Activated CD4-positive, alpha-beta T cell treated with anti-CD3 and anti-CD28 coated beads for 36 hours (primary cell): ENCODE measurements at regions of chr10 and their contacts with region 1.

Region 1: DNA sequence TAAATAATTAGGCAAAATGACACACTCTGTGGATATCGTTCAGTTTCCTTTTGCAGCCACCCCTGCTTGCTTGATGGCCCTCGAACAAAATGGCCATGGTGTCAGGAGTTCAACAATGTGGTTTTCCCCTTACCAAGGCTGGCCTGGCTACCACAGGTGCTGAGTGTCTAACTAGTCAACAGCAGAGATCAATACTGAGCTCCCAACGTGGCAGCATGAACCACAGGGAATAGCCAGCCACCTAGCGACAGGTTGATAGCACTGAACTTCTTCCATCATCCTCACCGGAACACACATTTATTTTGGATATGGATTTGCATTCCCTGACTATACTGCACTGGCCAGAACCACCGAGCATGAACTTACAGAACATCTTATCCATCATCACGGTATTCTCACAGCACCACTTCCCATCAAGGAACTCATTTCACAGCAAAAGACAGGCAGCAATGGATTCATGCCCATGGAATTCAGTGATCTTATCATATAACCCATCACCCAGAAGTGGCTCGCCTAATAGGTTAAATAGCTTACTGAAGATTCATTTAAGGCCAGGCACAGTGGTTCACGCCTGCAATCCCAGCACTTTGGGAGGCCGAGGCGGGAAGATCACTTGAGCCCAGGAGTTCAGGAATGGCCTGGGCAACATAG is 6.3 kb downstream of the C10orf67 start:
- DNase-seq: no peak
- ATAC-seq: no peak
- H3K4me3 Mint-ChIP-seq: no peak overlapping the region
- H3K27ac Mint-ChIP-seq: no peak overlapping the region
- H3K4me1 Mint-ChIP-seq: peaks cover 81% of the 10 kb centered on the region
- H3K27me3 Mint-ChIP-seq: no peaks in the 10 kb centered on the region

Region 2: GRCh38 chr10:21533467-21534279 is 1804.6 kb before region 1 on chr10 and contains the start of gene MLLT10:
- CTCF ChIA-PET with region 1: no interaction called
- POLR2A ChIA-PET with region 1: no interaction called
- intact Hi-C with region 1: loop called in 1 of 2 experiments (anchors 10 kb)
- DNase-seq: peak; percentile 95
- ATAC-seq: peak; percentile 87
- H3K4me3 Mint-ChIP-seq: peak within 1 kb of the TSS; percentile 95
- H3K27ac Mint-ChIP-seq: peak within 1 kb of the TSS; percentile 98
- H3K4me1 Mint-ChIP-seq: peaks cover 18% of the 10 kb centered on the region
- H3K27me3 Mint-ChIP-seq: no peaks in the 10 kb centered on the region
- total RNA-seq, gene MLLT10: 33.8 to 34.1 TPM

Region 3: GRCh38 chr10:23314835-23315239 is 23.5 kb before region 1 on chr10:
- CTCF ChIA-PET with region 1: interaction called, 3 read pairs
- POLR2A ChIA-PET with region 1: interaction called, 12 read pairs
- intact Hi-C with region 1: no loop called
- DNase-seq: peak; percentile 63
- ATAC-seq: peak; percentile 36
- H3K4me3 Mint-ChIP-seq: no peak overlapping the region
- H3K27ac Mint-ChIP-seq: no peak overlapping the region
- H3K4me1 Mint-ChIP-seq: no peaks in the 10 kb centered on the region
- H3K27me3 Mint-ChIP-seq: no peaks in the 10 kb centered on the region

Region 4: GRCh38 chr10:23362879-23363792 is 24.8 kb after region 1 on chr10:
- CTCF ChIA-PET with region 1: interaction called, 8 read pairs
- POLR2A ChIA-PET with region 1: interaction called, 5 read pairs
- intact Hi-C with region 1: loop called (anchors 1 kb)
- DNase-seq: peak; percentile 67
- ATAC-seq: peak; percentile 75
- H3K4me3 Mint-ChIP-seq: peak overlapping the region; percentile 39
- H3K27ac Mint-ChIP-seq: peak overlapping the region; percentile 96
- H3K4me1 Mint-ChIP-seq: peaks cover 60% of the 10 kb centered on the region
- H3K27me3 Mint-ChIP-seq: no peaks in the 10 kb centered on the region

Region 5: GRCh38 chr10:23413629-23414089 is 75.4 kb after region 1 on chr10:
- CTCF ChIA-PET with region 1: interaction called, 3 read pairs
- POLR2A ChIA-PET with region 1: no interaction called
- intact Hi-C with region 1: loop called in 1 of 2 experiments (anchors 2 kb)
- DNase-seq: no peak
- ATAC-seq: no peak
- H3K4me3 Mint-ChIP-seq: no peak overlapping the region
- H3K27ac Mint-ChIP-seq: no peak overlapping the region
- H3K4me1 Mint-ChIP-seq: peaks cover 23% of the 10 kb centered on the region
- H3K27me3 Mint-ChIP-seq: peaks cover 2% of the 10 kb centered on the region

Region 6: DNA sequence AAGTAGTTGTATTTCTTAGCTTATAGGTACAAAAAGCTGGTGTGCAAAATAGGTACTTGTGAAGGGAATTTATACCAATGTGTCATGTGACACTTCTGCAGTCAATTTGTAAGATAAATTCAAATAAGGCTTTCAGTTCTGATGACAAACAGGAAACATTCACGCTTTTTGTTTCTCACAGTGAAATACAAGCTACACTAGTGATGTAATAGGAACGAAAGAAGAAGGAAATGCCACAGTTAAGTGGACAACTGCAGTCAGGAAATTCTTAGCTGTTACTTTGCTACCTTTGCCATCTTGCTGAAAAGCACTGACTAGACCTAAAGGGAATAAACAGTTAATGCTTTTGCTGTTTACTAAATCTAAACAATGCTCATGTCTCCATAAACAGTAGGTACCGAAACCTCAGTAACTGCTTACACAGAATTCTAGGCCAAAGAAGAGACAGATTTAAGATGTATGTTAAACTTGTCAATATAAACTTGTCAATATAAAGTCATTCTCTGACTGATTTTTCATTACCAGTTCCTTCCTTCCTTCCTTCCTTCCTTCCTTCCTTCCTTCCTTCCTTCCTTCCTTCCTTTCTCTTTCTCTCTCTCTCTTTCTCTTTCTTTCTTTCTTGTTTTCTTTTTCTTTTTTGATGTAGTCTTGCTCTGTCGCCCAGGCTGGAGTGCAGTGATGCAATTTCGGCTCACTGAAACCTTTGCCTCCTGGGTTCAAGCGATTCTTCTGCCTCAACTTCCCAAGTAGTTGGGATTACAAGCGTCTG is 110.7 kb after region 1 on chr10:
- CTCF ChIA-PET with region 1: interaction called, 3 read pairs
- POLR2A ChIA-PET with region 1: interaction called, 3 read pairs
- intact Hi-C with region 1: loop called in 1 of 2 experiments (anchors 2 kb)
- DNase-seq: no peak
- ATAC-seq: peak; percentile 83
- H3K4me3 Mint-ChIP-seq: no peak overlapping the region
- H3K27ac Mint-ChIP-seq: peak overlapping the region; percentile 87
- H3K4me1 Mint-ChIP-seq: peaks cover 31% of the 10 kb centered on the region
- H3K27me3 Mint-ChIP-seq: no peaks in the 10 kb centered on the region

Region 7: DNA sequence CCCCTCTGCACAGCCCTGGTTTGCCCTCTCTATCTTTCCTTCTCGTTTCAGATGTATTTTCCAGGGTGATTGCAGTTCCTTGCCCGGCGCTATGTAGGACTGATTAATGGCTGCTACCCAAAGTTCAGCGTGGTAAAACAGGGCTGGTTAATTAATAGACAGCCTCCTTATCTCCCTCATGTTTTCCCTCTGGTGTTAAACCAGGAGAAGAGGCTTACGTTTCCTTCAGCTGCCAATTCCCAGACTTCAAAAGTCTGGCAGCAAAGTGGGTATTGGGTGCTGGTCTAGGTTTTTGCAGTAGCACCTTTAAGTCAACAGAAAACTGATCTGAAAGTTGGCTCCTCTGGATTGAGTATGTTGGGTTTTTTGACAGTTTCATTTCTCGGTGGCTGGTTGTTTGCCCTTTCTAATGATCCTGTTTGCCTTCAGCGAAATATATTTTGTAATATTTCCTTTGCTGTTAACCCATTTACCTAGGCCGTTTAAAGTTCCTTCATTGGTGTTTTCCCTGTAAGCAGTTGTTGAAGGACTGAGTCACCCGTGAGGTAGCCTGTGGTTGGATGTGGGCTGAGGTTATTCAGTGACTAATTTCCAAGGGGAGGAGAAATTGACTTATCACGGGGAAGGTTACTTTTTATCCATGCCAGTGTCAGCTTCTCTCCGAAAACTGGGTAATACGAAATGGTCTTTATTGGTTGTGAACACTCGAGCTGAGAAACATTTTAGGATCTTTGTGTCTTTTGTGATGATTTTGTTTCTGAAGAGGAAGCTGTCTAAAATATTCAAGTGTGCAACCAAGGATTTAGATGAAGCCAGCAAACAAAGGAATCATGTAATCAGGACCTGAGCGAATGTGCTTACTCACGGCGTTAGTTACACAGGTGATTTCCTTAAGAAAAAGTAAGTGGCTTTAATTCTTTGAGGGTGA is 1127.9 kb after region 1 on chr10:
- CTCF ChIA-PET with region 1: no interaction called
- POLR2A ChIA-PET with region 1: no interaction called
- intact Hi-C with region 1: loop called in 1 of 2 experiments (anchors 10 kb)
- DNase-seq: peak; percentile 80
- ATAC-seq: peak; percentile 79
- H3K4me3 Mint-ChIP-seq: no peak overlapping the region
- H3K27ac Mint-ChIP-seq: no peak overlapping the region
- H3K4me1 Mint-ChIP-seq: peaks cover 37% of the 10 kb centered on the region
- H3K27me3 Mint-ChIP-seq: peaks cover 18% of the 10 kb centered on the region